ENCODE measurements at regions of chr10 and their contacts with region 1.

Region 1: DNA sequence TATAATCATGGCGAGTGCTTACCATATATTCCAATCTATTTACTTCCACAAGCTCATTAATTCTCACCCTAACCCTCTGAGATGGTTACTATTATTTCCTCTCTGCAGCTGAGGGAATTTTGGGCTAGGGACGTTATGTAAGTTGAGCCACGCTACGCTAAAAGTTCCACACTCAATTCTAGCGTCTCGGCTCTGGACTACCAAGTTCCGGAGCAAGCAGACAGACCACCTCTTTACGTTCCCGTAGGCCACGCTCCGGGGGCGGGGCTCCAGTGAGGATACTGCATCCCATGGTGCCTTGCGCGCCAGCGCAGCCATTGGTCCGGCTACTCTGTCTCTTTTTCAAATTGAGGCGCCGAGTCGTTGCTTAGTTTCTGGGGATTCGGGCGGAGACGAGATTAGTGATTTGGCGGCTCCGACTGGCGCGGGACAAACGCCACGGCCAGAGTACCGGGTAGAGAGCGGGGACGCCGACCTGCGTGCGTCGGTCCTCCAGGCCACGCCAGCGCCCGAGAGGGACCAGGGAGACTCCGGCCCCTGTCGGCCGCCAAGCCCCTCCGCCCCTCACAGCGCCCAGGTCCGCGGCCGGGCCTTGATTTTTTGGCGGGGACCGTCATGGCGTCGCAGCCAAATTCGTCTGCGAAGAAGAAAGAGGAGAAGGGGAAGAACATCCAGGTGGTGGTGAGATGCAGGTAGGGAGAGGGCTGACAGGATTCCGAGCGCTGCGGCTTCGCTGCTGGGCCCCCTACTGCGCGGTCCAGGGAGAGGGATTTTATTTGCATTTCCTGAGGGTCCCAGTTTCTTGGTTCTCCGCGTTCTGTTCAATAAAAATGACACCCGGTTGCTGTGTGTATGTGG is at the start of gene KIF11:
- DNase-seq: peak; percentile 99
- ATAC-seq: peak; percentile 98
- H3K4me3 ChIP-seq: peak within 1 kb of the TSS; percentile 58 to 81
- H3K27ac ChIP-seq: peak within 1 kb of the TSS; percentile 79 to 83
- H3K4me1 ChIP-seq: no peaks in the 10 kb centered on the region
- H3K27me3 ChIP-seq: no peaks in the 10 kb centered on the region
- total RNA-seq, gene KIF11: 0.65 to 1.7 TPM

Region 2: GRCh38 chr10:92699518-92700381 is 106.8 kb after region 1 on chr10:
- intact Hi-C with region 1: loop called in 1 of 2 experiments (anchors 5 kb)
- DNase-seq: peak in 1 of 2 donors; percentile 62
- ATAC-seq: peak; percentile 67
- H3K4me3 ChIP-seq: peak overlapping the region; percentile 17 to 88
- H3K27ac ChIP-seq: peak overlapping the region in 1 of 2 donors; percentile 10
- H3K4me1 ChIP-seq: no peaks in the 10 kb centered on the region
- H3K27me3 ChIP-seq: no peaks in the 10 kb centered on the region

Measured in aorta (tissue), 5 donors.